ENCODE measurements at regions of chr21 and their contacts with region 1.

Region 1: DNA sequence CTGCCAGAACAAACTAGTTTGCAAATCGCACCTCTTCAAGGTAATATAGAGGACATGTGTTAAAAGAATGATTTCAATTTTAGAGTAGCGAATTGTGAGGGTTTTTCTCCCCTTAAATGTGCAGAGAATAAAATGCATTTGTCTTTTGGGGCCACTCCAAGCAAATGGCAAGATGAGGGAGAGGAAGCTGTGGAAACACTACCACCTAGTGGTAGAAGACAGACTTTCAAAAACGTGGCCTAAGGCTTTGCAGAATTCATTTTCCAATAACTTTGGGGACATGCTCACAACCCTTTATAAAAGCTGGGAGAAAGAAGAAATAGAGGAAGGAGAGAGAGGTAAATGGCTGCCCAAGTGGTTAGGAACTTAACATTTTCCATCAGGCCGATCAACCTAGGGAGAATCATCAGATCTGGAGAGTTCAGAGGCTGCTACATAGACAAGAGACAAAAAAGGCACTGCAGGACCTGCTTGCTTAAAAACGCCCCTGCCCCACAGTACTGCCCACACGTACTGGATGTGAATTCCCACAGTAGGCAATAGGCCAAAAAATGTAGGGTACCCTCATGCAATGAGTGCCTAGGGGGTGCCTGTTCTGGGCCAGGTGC is 15.7 kb upstream of the RCAN1 start:
- DNase-seq: no peak
- ATAC-seq: peak; percentile 75
- H3K4me3 Mint-ChIP-seq: no peak overlapping the region
- H3K27ac Mint-ChIP-seq: no peak overlapping the region
- H3K4me1 Mint-ChIP-seq: no peaks in the 10 kb centered on the region
- H3K27me3 Mint-ChIP-seq: peaks cover 8% of the 10 kb centered on the region
- CTCF ChIP-seq: no peak

Region 2: GRCh38 chr21:34362136-34362444 is 268.6 kb before region 1 on chr21:
- CTCF ChIA-PET with region 1: interaction called, 10 read pairs
- POLR2A ChIA-PET with region 1: no interaction called
- intact Hi-C with region 1: loop called (anchors 1 kb)
- DNase-seq: no peak
- ATAC-seq: peak; percentile 15
- H3K4me3 Mint-ChIP-seq: no peak overlapping the region
- H3K27ac Mint-ChIP-seq: no peak overlapping the region
- H3K4me1 Mint-ChIP-seq: peaks cover 7% of the 10 kb centered on the region
- H3K27me3 Mint-ChIP-seq: peaks cover 14% of the 10 kb centered on the region
- CTCF ChIP-seq: no peak

Region 3: GRCh38 chr21:34367321-34367935 is 263.2 kb before region 1 on chr21:
- CTCF ChIA-PET with region 1: interaction called, 10 read pairs
- POLR2A ChIA-PET with region 1: no interaction called
- intact Hi-C with region 1: loop called (anchors 1 kb)
- DNase-seq: no peak
- ATAC-seq: peak; percentile 81
- H3K4me3 Mint-ChIP-seq: no peak overlapping the region
- H3K27ac Mint-ChIP-seq: no peak overlapping the region
- H3K4me1 Mint-ChIP-seq: no peaks in the 10 kb centered on the region
- H3K27me3 Mint-ChIP-seq: peaks cover 11% of the 10 kb centered on the region
- CTCF ChIP-seq: no peak

Region 4: GRCh38 chr21:34510148-34511142 is 120.2 kb before region 1 on chr21:
- CTCF ChIA-PET with region 1: interaction called, 7 read pairs
- POLR2A ChIA-PET with region 1: no interaction called
- intact Hi-C with region 1: loop called (anchors 1 kb)
- DNase-seq: no peak
- ATAC-seq: peak; percentile 54
- H3K4me3 Mint-ChIP-seq: no peak overlapping the region
- H3K27ac Mint-ChIP-seq: no peak overlapping the region
- H3K4me1 Mint-ChIP-seq: no peaks in the 10 kb centered on the region
- H3K27me3 Mint-ChIP-seq: no peaks in the 10 kb centered on the region
- CTCF ChIP-seq: no peak

Region 5: GRCh38 chr21:34570313-34570712 is 60.3 kb before region 1 on chr21:
- CTCF ChIA-PET with region 1: no interaction called
- POLR2A ChIA-PET with region 1: no interaction called
- intact Hi-C with region 1: no loop called
- DNase-seq: no peak
- ATAC-seq: no peak
- H3K4me3 Mint-ChIP-seq: no peak overlapping the region
- H3K27ac Mint-ChIP-seq: no peak overlapping the region
- H3K4me1 Mint-ChIP-seq: peaks cover 8% of the 10 kb centered on the region
- H3K27me3 Mint-ChIP-seq: no peaks in the 10 kb centered on the region
- CTCF ChIP-seq: no peak

Region 6: DNA sequence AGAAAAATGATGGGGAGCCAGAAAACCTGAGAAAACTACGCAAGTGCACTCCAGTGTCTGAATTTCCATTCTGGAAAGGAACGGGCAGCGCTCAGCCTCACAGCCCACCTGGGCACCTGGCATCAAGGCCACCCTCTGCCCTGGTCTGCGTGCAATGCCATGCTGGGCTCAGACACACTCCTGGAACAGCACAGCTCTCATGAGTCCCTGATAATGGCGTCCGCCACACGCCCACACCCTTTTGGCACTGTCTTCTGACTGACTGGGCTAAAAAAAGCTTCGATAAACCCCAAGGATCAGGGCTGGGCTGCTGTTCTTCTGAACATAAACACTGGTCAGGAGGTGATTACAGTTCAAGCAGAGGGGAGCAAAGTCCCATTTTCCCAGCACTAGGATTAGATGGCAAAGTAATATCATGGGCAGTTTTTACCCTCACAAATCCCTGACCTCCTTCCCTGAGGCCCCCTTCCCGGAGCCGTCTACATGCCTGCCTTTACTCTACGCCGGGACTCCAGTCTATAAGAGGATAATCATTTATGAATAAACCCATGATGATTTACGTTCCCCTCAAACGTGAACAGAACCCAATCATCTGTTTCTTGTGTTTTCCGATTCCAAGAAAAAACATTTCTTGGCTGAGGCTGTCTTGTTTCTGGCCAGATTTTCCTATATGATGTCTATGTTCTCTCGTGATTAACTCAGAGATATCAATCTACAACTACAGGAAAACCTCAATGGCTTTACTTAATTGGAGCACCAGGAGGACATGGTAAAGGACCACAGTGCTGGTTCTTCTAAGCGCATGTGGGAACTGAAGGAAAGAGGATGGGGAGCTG is 38.3 kb before region 1 on chr21:
- CTCF ChIA-PET with region 1: no interaction called
- POLR2A ChIA-PET with region 1: no interaction called
- intact Hi-C with region 1: no loop called
- DNase-seq: no peak
- ATAC-seq: no peak
- H3K4me3 Mint-ChIP-seq: no peak overlapping the region
- H3K27ac Mint-ChIP-seq: no peak overlapping the region
- H3K4me1 Mint-ChIP-seq: no peaks in the 10 kb centered on the region
- H3K27me3 Mint-ChIP-seq: no peaks in the 10 kb centered on the region
- CTCF ChIP-seq: no peak

Region 7: DNA sequence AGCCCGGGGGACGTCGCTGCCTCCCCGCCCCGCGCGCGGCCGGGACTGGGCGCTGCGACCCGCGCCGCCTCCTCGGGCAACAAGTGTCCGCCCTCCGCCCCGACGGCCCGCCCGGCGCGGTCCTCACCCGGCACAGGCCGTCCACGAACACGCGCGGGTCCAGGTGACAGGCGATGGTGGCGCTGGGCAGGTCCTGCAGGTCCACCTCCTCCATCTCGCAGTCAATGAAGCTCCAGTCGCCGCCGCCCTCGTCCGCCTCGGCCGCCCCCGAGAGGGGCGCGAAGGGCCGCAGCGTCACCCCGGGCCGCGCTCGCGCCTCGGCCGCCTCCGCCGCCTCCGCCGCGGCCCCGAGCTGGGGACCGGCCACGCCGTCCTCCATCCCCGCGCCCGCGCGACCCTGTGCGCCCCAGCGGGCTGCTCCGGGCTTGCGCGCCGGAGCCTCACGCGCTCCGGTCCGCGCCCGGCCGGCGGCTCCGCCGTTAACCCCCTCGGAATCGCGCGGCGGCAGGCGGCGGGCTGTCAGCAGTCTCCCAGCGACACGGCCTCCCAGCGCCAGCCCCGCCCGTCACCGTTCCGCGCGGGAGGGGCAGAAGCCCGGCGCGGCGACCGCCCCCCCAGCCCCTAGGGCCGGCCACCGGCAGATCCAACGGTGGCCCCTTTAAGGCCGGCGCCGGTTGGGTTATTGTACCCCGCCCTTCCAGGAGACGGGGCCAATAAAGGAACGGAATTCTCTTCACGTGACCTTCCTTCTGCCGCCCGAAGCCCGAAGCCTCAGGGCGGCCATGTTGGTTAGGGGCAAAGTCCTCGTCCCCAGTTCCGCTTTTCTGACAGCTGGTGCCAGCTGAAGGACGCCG is 15.8 kb before region 1 on chr21 and contains the start of gene RCAN1:
- CTCF ChIA-PET with region 1: interaction called, 5 read pairs
- POLR2A ChIA-PET with region 1: no interaction called
- intact Hi-C with region 1: loop called (anchors 2 kb)
- DNase-seq: peak; percentile 78
- ATAC-seq: peak; percentile 94
- H3K4me3 Mint-ChIP-seq: peak within 1 kb of the TSS; percentile 82
- H3K27ac Mint-ChIP-seq: peak within 1 kb of the TSS; percentile 82
- H3K4me1 Mint-ChIP-seq: peaks cover 7% of the 10 kb centered on the region
- H3K27me3 Mint-ChIP-seq: peaks cover 1% of the 10 kb centered on the region
- CTCF ChIP-seq: no peak
- total RNA-seq, gene RCAN1: 5.8 and 6.3 TPM in 2 replicates